ENCODE measurements at regions of chr10 and their contacts with region 1.

Region 1: DNA sequence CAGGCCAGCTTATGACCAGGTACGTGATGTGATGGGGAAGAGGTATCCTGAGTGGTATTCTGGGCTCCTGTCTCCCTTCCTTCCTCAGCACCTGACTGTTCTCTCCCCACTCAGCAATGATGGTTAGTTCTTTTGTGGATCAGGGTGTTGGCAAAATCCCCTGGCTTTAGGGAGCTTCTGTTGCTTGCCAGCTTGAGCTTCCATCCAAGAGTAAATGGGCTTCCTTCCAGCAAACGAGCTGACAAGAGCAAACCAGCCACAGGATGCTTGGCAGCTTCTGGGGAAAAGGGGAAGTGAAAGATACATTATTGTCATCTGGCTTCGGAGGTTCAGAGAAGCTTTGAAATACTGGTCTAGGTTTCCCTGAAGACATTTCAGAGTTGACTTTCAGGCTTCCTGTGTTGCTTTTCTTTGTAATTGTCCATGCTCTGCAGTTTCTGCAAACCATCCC is 5.2 kb downstream of the DUSP5 start:
- DNase-seq: peak in 1 of 9 donors; percentile 18
- ATAC-seq: peak; percentile 10
- H3K4me3 ChIP-seq: peak overlapping the region; percentile 17
- H3K4me3 Mint-ChIP-seq: peak overlapping the region; percentile 15 to 97 (median 70)
- H3K27ac ChIP-seq: peak overlapping the region; percentile 53
- H3K27ac Mint-ChIP-seq: peak overlapping the region; percentile 53 to 94 (median 81)
- H3K4me1 ChIP-seq: peaks cover 42 to 70% of the 10 kb centered on the region in 2 donors
- H3K4me1 Mint-ChIP-seq: peaks cover 55 to 88% (median 60%) of the 10 kb centered on the region in 7 donors
- H3K27me3 ChIP-seq: no peaks in the 10 kb centered on the region
- H3K27me3 Mint-ChIP-seq: peaks cover 0 to 3% (median 0%) of the 10 kb centered on the region in 5 donors

Region 2: GRCh38 chr10:110296966-110297365 is 205.9 kb before region 1 on chr10:
- CTCF ChIA-PET with region 1: no interaction called
- POLR2A ChIA-PET with region 1: no interaction called
- intact Hi-C with region 1: no loop called
- DNase-seq: no peak
- ATAC-seq: no peak
- H3K4me3 ChIP-seq: no peak overlapping the region
- H3K4me3 Mint-ChIP-seq: no peak overlapping the region
- H3K27ac ChIP-seq: no peak overlapping the region
- H3K27ac Mint-ChIP-seq: peak overlapping the region in 4 of 9 donors; percentile 6 to 49 (median 28)
- H3K4me1 ChIP-seq: peaks cover 10 to 20% of the 10 kb centered on the region in 2 donors
- H3K4me1 Mint-ChIP-seq: peaks cover 18 to 54% (median 40%) of the 10 kb centered on the region in 7 donors
- H3K27me3 ChIP-seq: no peaks in the 10 kb centered on the region
- H3K27me3 Mint-ChIP-seq: no peaks in the 10 kb centered on the region

Region 3: GRCh38 chr10:110529596-110530011 is 26.7 kb after region 1 on chr10:
- CTCF ChIA-PET with region 1: interaction called, 3 read pairs
- POLR2A ChIA-PET with region 1: no interaction called
- intact Hi-C with region 1: loop called in 1 of 2 experiments (anchors 1 kb)
- DNase-seq: no peak
- ATAC-seq: peak; percentile 56
- H3K4me3 ChIP-seq: no peak overlapping the region
- H3K4me3 Mint-ChIP-seq: peak overlapping the region in 6 of 10 donors; percentile 24 to 63 (median 34)
- H3K27ac ChIP-seq: no peak overlapping the region
- H3K27ac Mint-ChIP-seq: peak overlapping the region in 2 of 9 donors; percentile 69 to 79
- H3K4me1 ChIP-seq: peaks cover 9 to 21% of the 10 kb centered on the region in 2 donors
- H3K4me1 Mint-ChIP-seq: peaks cover 11 to 62% (median 22%) of the 10 kb centered on the region in 7 donors
- H3K27me3 ChIP-seq: no peaks in the 10 kb centered on the region
- H3K27me3 Mint-ChIP-seq: peaks cover 0 to 9% (median 0%) of the 10 kb centered on the region in 5 donors

Region 4: DNA sequence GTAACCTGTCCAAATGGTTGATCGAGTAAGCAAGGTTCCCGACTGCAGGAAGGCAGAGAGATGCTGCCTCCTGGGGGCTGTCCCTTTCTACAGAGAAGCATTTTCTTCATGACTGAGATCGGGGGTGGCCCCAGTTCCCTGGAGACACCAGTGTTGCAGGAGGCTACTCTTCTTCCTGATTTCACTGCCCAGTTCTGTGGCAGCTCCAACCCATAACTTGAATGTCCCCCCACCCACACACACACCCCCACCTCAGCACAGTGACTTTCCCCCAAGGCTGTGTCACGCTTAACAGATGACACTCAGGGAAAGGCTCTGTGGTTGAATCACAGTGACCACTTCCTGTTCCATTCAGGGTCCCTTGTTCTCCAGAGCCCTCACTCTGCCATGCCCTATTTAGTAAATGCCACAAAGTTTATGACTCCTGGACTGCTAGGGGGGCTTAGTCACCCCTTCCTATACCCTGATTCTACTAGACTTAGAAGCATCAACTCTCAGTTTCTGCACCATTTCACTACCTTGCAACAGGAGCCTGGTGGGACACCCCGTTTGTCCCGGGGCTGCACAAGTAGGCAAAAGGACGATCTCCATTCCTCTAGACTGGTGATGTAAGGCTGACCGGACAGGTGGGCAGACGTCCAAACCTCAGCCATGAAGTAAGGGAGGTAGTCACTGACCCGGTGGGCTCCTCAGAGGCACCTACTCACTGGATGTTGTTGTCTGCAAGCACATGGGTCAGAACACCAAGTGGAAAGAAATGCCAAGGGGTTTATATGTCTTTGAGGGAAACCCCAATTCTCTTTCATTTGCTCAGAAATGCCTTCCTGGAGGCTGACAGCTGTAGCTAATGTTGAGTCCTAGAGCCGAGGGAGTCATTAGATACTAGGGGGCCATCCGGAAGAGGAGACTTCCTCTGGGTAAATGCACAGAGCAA is 33.3 kb after region 1 on chr10:
- CTCF ChIA-PET with region 1: interaction called, 3 read pairs
- POLR2A ChIA-PET with region 1: no interaction called
- intact Hi-C with region 1: loop called in 1 of 2 experiments (anchors 1 kb)
- DNase-seq: peak in 6 of 9 donors; percentile 10 to 70 (median 21)
- ATAC-seq: peak; percentile 94
- H3K4me3 ChIP-seq: no peak overlapping the region
- H3K4me3 Mint-ChIP-seq: peak overlapping the region in 2 of 10 donors; percentile 71 to 73
- H3K27ac ChIP-seq: no peak overlapping the region
- H3K27ac Mint-ChIP-seq: peak overlapping the region in 2 of 9 donors; percentile 48 to 74
- H3K4me1 ChIP-seq: peaks cover 7 to 9% of the 10 kb centered on the region in 2 donors
- H3K4me1 Mint-ChIP-seq: peaks cover 15 to 50% (median 17%) of the 10 kb centered on the region in 7 donors
- H3K27me3 ChIP-seq: no peaks in the 10 kb centered on the region
- H3K27me3 Mint-ChIP-seq: peaks cover 0 to 8% (median 0%) of the 10 kb centered on the region in 5 donors

Region 5: GRCh38 chr10:110547139-110547761 is 44.4 kb after region 1 on chr10:
- CTCF ChIA-PET with region 1: interaction called, 4 read pairs
- POLR2A ChIA-PET with region 1: no interaction called
- intact Hi-C with region 1: loop called in 1 of 2 experiments (anchors 2 kb)
- DNase-seq: peak in 7 of 9 donors; percentile 40 to 75 (median 68)
- ATAC-seq: peak; percentile 85
- H3K4me3 ChIP-seq: no peak overlapping the region
- H3K4me3 Mint-ChIP-seq: peak overlapping the region in 1 of 10 donors; percentile 2
- H3K27ac ChIP-seq: no peak overlapping the region
- H3K27ac Mint-ChIP-seq: peak overlapping the region in 2 of 9 donors; percentile 3 to 6
- H3K4me1 ChIP-seq: peaks cover 0 to 5% of the 10 kb centered on the region in 2 donors
- H3K4me1 Mint-ChIP-seq: peaks cover 3 to 16% (median 5%) of the 10 kb centered on the region in 7 donors
- H3K27me3 ChIP-seq: no peaks in the 10 kb centered on the region
- H3K27me3 Mint-ChIP-seq: peaks cover 0 to 39% (median 11%) of the 10 kb centered on the region in 5 donors